Activated CD4-positive, alpha-beta memory T cell treated with anti-CD3 and anti-CD28 coated beads for 36 hours (primary cell): ENCODE measurements at regions of chr2 and their contacts with region 1.

Region 1: GRCh38 chr2:206800506-206801417 is 35.4 kb downstream of the FASTKD2 start:
- DNase-seq: peak; percentile 57
- H3K4me3 Mint-ChIP-seq: no peak overlapping the region
- H3K27ac Mint-ChIP-seq: no peak overlapping the region
- H3K4me1 Mint-ChIP-seq: peaks cover 13% of the 10 kb centered on the region
- H3K27me3 Mint-ChIP-seq: no peaks in the 10 kb centered on the region

Region 2: GRCh38 chr2:206783718-206784117 is 17.0 kb before region 1 on chr2:
- CTCF ChIA-PET with region 1: interaction called, 14 read pairs
- POLR2A ChIA-PET with region 1: no interaction called
- intact Hi-C with region 1: no loop called
- DNase-seq: no peak
- H3K4me3 Mint-ChIP-seq: no peak overlapping the region
- H3K27ac Mint-ChIP-seq: no peak overlapping the region
- H3K4me1 Mint-ChIP-seq: peaks cover 13% of the 10 kb centered on the region
- H3K27me3 Mint-ChIP-seq: no peaks in the 10 kb centered on the region

Region 3: DNA sequence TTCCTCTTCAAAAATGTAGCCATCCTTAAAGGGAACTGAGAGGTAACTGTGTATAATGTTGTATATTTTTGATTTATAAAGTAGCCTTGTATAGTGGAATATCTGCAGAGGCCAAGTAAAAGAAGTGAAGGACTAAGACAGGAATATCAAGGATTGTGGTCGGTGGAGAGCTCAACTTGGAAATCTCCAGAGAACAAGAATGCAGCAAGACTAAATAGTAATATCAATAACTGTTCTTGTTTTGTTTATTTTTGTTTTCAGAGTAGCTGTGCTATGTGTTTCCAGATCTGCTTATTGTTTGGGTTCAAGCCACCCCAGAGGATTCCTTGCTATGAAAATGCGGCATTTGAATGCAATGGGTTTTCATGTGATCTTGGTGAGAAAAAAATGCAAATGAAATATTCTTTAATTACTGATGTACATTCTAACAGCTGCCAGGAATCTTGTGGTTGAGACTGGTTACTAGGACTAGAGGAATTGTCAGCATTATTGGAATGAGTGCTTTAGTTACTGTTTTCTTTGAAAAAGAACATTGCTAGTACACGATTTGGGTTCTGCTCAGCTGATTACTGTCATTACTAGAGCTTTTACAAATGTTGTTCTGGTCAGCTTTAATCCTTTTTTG is 10.3 kb before region 1 on chr2:
- CTCF ChIA-PET with region 1: interaction called, 15 read pairs
- POLR2A ChIA-PET with region 1: no interaction called
- intact Hi-C with region 1: no loop called
- DNase-seq: no peak
- H3K4me3 Mint-ChIP-seq: no peak overlapping the region
- H3K27ac Mint-ChIP-seq: no peak overlapping the region
- H3K4me1 Mint-ChIP-seq: no peaks in the 10 kb centered on the region
- H3K27me3 Mint-ChIP-seq: no peaks in the 10 kb centered on the region

Region 4: DNA sequence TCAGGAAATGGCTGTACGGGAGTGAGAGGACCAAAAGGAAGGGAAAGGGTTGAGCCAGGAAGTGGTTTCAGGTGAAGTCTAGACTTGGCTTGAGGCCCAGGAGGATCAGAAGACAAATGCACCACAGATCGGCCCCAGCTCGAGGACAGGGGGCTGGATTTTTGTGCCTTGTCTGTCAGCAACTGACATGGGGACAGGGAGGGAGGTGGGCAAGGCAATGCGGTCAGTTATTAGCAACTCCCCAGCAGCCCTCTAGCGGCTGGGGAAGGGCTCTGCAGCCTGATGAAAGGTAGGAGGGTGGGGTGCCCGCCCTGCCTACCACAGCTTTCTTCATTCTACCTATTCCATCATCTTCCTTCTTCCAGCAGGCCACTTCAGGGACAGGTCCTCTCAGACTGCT is 188.5 kb after region 1 on chr2:
- CTCF ChIA-PET with region 1: interaction called, 3 read pairs
- POLR2A ChIA-PET with region 1: no interaction called
- intact Hi-C with region 1: loop called (anchors 5 kb)
- DNase-seq: peak; percentile 18
- H3K4me3 Mint-ChIP-seq: no peak overlapping the region
- H3K27ac Mint-ChIP-seq: no peak overlapping the region
- H3K4me1 Mint-ChIP-seq: peaks cover 24% of the 10 kb centered on the region
- H3K27me3 Mint-ChIP-seq: no peaks in the 10 kb centered on the region